ENCODE measurements at regions of chr2 and their contacts with region 1.

Region 1: DNA sequence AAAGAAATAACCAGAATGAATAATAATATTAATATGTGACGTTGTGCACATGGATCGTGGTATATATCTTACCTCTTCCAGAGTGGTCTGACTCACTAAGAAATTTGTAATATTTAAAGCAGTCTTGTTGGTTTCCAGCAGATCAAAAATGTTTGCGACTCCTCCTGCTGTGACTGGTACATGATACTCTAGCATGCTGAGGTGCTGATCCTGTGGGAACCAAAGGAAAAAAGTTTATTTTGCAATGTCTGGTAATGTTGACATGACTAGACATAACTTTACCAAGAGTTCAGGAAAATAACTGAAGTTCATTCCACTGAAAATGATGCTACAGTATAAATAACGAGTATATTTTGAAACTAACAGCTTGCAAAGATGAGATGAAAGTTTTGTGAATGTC is 124.5 kb upstream of the BARD1 start:
- DNase-seq: no peak
- ATAC-seq: no peak
- H3K4me3 ChIP-seq: no peak overlapping the region
- H3K4me3 Mint-ChIP-seq: no peak overlapping the region
- H3K27ac ChIP-seq: no peak overlapping the region
- H3K27ac Mint-ChIP-seq: no peak overlapping the region
- H3K4me1 ChIP-seq: no peaks in the 10 kb centered on the region
- H3K4me1 Mint-ChIP-seq: no peaks in the 10 kb centered on the region
- H3K27me3 ChIP-seq: no peaks in the 10 kb centered on the region
- H3K27me3 Mint-ChIP-seq: no peaks in the 10 kb centered on the region
- CTCF ChIP-seq: no peak

Region 2: DNA sequence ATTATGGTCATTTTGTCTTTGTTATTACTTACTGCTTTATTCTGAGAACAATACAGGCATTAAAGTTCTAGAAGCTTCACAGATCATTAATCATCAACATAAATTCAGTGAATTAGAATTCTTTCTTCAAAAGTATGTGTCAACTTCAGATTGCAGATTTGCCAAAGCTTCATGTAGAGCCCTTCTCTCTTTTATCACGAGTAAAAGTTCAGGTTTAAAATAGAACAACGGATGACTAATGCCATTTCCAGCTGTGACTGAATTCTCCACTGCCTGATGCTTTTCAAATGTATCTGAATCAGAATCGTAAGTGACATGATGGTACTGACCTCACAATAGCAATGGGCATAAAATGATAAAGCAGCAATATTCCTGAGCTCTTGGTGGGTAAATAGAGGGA is 88.4 kb after region 1 on chr2:
- CTCF ChIA-PET with region 1: no interaction called
- POLR2A ChIA-PET with region 1: no interaction called
- intact Hi-C with region 1: no loop called
- DNase-seq: no peak
- ATAC-seq: no peak
- H3K4me3 ChIP-seq: no peak overlapping the region
- H3K4me3 Mint-ChIP-seq: no peak overlapping the region
- H3K27ac ChIP-seq: no peak overlapping the region
- H3K27ac Mint-ChIP-seq: no peak overlapping the region
- H3K4me1 ChIP-seq: no peaks in the 10 kb centered on the region
- H3K4me1 Mint-ChIP-seq: no peaks in the 10 kb centered on the region
- H3K27me3 ChIP-seq: no peaks in the 10 kb centered on the region
- H3K27me3 Mint-ChIP-seq: no peaks in the 10 kb centered on the region
- CTCF ChIP-seq: no peak

Region 3: DNA sequence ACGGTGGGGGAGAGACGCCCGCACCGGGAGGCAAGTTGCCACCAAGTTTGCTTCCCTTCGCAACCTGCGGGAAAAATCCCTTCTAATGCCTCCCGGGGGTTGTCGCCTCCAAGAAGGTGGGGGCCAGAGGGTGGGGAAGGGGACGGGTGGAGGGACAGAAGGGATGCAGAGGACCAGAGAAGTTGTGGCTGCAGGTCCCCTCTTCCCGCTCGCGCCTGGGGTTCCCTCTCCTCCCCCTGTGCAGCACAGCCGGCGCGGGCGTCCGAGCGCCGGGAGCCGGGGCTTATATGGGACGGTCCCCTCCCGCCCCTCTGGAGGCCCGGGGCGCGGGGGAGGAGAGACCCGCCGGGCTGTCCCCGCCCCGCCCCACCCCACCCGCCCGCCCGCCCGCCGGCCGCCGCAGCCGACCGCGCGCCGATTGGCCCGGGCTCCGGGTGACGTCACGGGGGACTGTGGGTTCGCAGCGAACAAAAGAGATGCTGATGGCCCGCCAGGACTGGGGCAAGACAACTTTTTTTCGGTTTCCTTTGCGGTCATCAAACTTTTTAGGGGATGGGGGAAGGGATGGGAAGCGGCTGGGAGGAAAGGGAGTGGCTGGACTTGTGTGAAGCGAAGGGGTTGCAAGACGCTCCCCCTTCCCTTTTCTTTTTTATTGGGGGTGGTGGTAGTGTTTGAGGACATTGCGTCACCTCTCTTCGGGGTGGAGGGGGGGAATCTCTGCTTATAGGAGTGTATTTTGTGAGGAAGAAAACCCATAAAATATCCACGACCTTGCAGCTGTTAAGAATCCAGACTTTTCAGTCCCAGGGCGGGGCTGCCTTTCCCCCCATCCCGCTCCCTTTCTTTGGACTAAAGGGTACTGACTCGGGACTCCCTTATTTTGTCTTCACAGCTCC is 502.1 kb after region 1 on chr2 and contains the start of gene FN1:
- CTCF ChIA-PET with region 1: no interaction called
- POLR2A ChIA-PET with region 1: no interaction called
- intact Hi-C with region 1: loop called in 1 of 2 experiments (anchors 5 kb)
- DNase-seq: peak; percentile 27 to 73 (median 65)
- ATAC-seq: peak; percentile 71
- H3K4me3 ChIP-seq: peak within 1 kb of the TSS; percentile 34 to 55
- H3K4me3 Mint-ChIP-seq: peak within 1 kb of the TSS; percentile 82
- H3K27ac ChIP-seq: no peak within 1 kb of the TSS
- H3K27ac Mint-ChIP-seq: no peak within 1 kb of the TSS
- H3K4me1 ChIP-seq: peaks cover 14% of the 10 kb centered on the region
- H3K4me1 Mint-ChIP-seq: peaks cover 17% of the 10 kb centered on the region
- H3K27me3 ChIP-seq: peaks cover 25 to 30% of the 10 kb centered on the region in 2 experiments
- H3K27me3 Mint-ChIP-seq: peaks cover 66% of the 10 kb centered on the region
- CTCF ChIP-seq: no peak
- total RNA-seq, gene FN1: not detected